Heart right ventricle (tissue), 16 donors: ENCODE measurements at regions of chr3 and their contacts with region 1.

Region 1: DNA sequence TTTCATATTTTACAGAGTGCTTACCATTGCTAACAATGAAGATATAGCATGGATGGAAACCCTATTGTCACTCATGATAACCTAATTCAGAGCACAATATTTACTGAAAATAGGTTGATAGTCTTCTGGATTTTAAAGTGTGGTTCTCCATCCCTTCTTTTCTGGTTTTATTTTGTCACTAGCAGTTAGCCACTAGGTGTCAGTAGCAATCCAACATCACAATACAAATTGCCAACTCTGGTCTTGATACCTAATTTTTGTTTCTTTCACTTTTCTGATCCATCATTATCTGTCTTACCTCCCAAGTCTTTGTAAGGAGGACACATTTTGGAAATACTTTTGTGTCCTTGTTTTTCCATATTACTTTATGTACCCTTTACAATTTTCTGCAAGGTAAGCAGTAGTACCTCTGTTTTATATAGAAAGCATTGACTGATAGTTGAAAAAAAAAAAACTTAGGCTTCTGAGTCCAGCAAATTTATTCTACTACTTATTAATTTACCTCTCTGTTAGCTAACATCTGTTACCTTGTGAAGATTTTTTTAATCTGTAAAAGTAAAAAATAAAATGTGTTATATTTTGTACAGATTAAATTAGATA is 28.3 kb upstream of the CRYBG3 start:
- DNase-seq: peak in 1 of 2 donors; percentile 10
- ATAC-seq: peak in 1 of 8 donors; percentile 47
- H3K4me3 ChIP-seq: no peak overlapping the region
- H3K27ac ChIP-seq: no peak overlapping the region
- H3K4me1 ChIP-seq: no peaks in the 10 kb centered on the region
- H3K27me3 ChIP-seq: no peaks in the 10 kb centered on the region
- CTCF ChIP-seq: peak; percentile 72 to 92 (median 85)

Region 2: DNA sequence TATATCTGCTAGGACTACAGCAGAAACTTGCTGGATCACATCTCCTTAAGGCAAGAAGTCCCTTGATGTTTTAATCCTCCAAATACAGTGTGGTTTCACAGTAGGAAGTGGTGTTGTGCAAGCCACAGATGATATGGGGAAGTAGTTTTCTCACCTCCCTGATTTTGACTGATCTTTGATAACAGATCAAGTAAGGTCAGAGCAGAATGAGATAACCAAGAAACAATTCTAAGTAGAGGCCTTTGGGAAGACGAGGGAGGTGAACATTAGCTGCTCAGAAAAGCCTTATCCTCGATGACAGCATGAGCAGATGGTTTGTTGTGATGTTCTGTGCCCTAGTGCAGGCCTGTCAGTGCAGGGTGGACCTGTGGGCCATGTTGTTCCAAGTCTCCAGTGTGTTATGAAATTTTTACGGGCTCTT is 117.4 kb after region 1 on chr3:
- intact Hi-C with region 1: loop called in 1 of 10 experiments (anchors 10 kb)
- DNase-seq: peak in 1 of 2 donors; percentile 7
- ATAC-seq: peak in 6 of 8 donors; percentile 33 to 67 (median 56)
- H3K4me3 ChIP-seq: peak overlapping the region in 1 of 10 donors; percentile 29
- H3K27ac ChIP-seq: peak overlapping the region in 4 of 10 donors; percentile 23 to 65 (median 46)
- H3K4me1 ChIP-seq: peaks cover 0 to 14% (median 9%) of the 10 kb centered on the region in 9 donors
- H3K27me3 ChIP-seq: no peaks in the 10 kb centered on the region
- CTCF ChIP-seq: no peak

Region 3: GRCh38 chr3:97940034-97940433 is 146.5 kb after region 1 on chr3:
- intact Hi-C with region 1: loop called in 3 of 10 experiments (anchors 5 to 10 kb)
- DNase-seq: no peak
- ATAC-seq: peak in 2 of 8 donors; percentile 38 to 58
- H3K4me3 ChIP-seq: no peak overlapping the region
- H3K27ac ChIP-seq: no peak overlapping the region
- H3K4me1 ChIP-seq: no peaks in the 10 kb centered on the region
- H3K27me3 ChIP-seq: no peaks in the 10 kb centered on the region
- CTCF ChIP-seq: peak in 4 of 9 donors; percentile 24 to 47 (median 34)

Region 4: GRCh38 chr3:98329392-98330124 is 536.0 kb after region 1 on chr3:
- intact Hi-C with region 1: loop called in 1 of 10 experiments (anchors 10 kb)
- DNase-seq: peak in 1 of 2 donors; percentile 18
- ATAC-seq: peak in 5 of 8 donors; percentile 25 to 58 (median 52)
- H3K4me3 ChIP-seq: no peak overlapping the region
- H3K27ac ChIP-seq: no peak overlapping the region
- H3K4me1 ChIP-seq: no peaks in the 10 kb centered on the region
- H3K27me3 ChIP-seq: peaks cover 0 to 19% (median 3%) of the 10 kb centered on the region in 7 donors
- CTCF ChIP-seq: peak; percentile 27 to 71 (median 62)